CD14-positive monocyte (primary cell): ENCODE measurements at regions of chr11 and their contacts with region 1.

Region 1: GRCh38 chr11:43358801-43359421 is at the start of gene TTC17:
- DNase-seq: peak; percentile 88 to 90 (median 88)
- H3K4me3 ChIP-seq: peak within 1 kb of the TSS; percentile 66 to 91 (median 70)
- H3K4me3 Mint-ChIP-seq: peak within 1 kb of the TSS; percentile 97 to 98
- H3K27ac ChIP-seq: peak within 1 kb of the TSS; percentile 63 to 94
- H3K27ac Mint-ChIP-seq: peak within 1 kb of the TSS; percentile 89 to 97 (median 96)
- H3K4me1 ChIP-seq: peaks cover 23 to 27% of the 10 kb centered on the region in 2 donors
- H3K4me1 Mint-ChIP-seq: peaks cover 35% of the 10 kb centered on the region
- H3K27me3 ChIP-seq: no peaks in the 10 kb centered on the region
- H3K27me3 Mint-ChIP-seq: peaks cover 0 to 1% (median 0%) of the 10 kb centered on the region in 3 donors
- CTCF ChIP-seq: no peak
- polyA plus RNA-seq, gene TTC17: 34.7 to 82.5 (median 40.8) TPM

Region 2: DNA sequence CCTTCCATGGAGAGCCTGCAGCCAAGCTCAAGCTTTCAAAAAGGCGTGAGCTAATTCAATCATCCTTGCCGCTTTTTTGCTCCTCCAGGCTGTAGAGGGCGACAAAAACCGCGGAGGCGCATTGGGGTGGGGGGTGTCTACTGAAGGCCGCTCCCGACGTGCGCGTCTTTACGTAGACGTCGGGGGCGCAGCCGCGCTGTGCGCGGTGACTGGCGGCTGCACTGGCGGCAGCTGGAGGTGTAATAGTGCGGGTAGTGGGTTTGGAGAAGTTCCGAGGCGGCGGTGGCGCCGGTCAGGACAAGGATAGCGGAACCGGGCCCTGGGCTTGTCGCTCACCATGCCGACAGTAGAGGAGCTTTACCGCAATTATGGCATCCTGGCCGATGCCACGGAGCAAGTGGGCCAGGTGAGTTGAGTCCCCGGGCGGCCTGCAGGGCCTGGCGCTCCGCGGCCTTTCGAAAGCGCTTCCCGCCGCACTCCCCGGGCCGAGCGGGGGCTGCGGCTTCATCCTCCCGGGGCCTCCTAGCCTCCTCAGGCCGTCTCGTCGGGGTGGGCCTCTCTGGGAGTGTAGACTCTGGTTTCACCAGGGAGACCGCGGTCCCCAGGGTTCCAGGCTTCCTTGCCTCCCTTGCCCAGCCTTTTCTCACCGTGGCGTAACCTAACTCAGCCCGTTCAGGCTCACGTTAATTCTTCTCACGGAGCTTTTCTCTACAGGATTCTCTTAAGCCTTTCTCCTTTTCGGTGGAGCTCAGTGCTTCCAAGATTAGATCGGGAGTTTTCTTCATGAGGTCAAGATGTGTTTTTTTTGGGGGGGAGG is 46.9 kb before region 1 on chr11 and contains the start of gene API5:
- intact Hi-C with region 1: loop called in 1 of 2 experiments (anchors 1 kb)
- DNase-seq: peak; percentile 93 to 95 (median 93)
- H3K4me3 ChIP-seq: peak within 1 kb of the TSS; percentile 49 to 85 (median 82)
- H3K4me3 Mint-ChIP-seq: peak within 1 kb of the TSS; percentile 85 to 98
- H3K27ac ChIP-seq: peak within 1 kb of the TSS; percentile 64 to 89
- H3K27ac Mint-ChIP-seq: peak within 1 kb of the TSS; percentile 83 to 95 (median 91)
- H3K4me1 ChIP-seq: peaks cover 13 to 20% of the 10 kb centered on the region in 2 donors
- H3K4me1 Mint-ChIP-seq: peaks cover 33% of the 10 kb centered on the region
- H3K27me3 ChIP-seq: no peaks in the 10 kb centered on the region
- H3K27me3 Mint-ChIP-seq: peaks cover 4 to 8% (median 6%) of the 10 kb centered on the region in 3 donors
- CTCF ChIP-seq: peak; percentile 71
- polyA plus RNA-seq, gene API5: 17.1 to 84.0 (median 65.9) TPM

Region 3: DNA sequence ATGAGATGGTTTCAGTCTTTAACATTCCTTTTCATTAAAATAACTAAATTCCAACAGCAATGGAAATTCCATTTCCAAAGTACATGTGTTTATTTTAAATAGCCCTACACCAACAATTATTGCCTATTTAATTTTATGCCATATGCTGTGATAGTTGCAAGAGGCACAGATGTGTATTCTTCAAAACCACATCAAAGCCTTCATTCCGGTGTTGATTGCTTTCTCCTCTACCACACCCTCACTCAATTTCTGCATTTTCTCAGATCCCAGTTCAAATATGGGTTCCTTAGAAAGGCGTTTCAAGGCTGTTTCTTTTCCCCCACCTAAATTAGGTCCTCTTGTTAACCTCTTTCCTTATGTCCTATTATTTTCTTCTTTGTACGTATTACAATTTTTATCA is 315.6 kb after region 1 on chr11:
- intact Hi-C with region 1: loop called in 1 of 2 experiments (anchors 10 kb)
- DNase-seq: no peak
- H3K4me3 ChIP-seq: no peak overlapping the region
- H3K4me3 Mint-ChIP-seq: no peak overlapping the region
- H3K27ac ChIP-seq: no peak overlapping the region
- H3K27ac Mint-ChIP-seq: no peak overlapping the region
- H3K4me1 ChIP-seq: peaks cover 1 to 2% of the 10 kb centered on the region in 2 donors
- H3K4me1 Mint-ChIP-seq: peaks cover 3% of the 10 kb centered on the region
- H3K27me3 ChIP-seq: peaks cover under 1 to 3% of the 10 kb centered on the region in 2 donors
- H3K27me3 Mint-ChIP-seq: peaks cover 3 to 15% (median 12%) of the 10 kb centered on the region in 3 donors
- CTCF ChIP-seq: no peak